Dorsolateral prefrontal cortex (tissue), 120 donors: ENCODE measurements at regions of chr11 and their contacts with region 1.

Region 1: DNA sequence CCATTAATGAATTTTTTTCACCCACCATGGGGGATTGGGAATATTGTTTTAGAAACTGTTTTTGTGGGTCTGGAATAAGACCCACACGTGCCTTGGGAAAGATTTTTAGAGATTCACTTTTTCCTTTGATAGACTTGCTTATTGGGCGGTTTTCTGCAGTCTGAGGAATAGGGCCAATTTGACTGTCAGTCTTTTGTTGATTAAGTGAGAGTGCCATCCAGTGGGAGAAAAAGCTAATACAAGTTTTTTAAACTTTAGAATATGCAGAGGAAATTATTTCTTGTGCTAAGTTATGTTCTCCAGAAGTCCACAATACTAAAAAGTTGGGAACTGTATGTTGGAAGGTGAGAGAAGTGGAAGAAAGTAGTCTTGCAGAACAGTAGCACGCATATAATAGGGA is 56.1 kb downstream of the PRMT3 start:
- DNase-seq: no peak
- H3K4me3 ChIP-seq: no peak overlapping the region
- H3K27ac ChIP-seq: no peak overlapping the region
- H3K27me3 ChIP-seq: no peaks in the 10 kb centered on the region
- CTCF ChIP-seq: peak in 49 of 56 donors; percentile 12 to 73 (median 41)

Region 2: GRCh38 chr11:20351751-20352262 is 91.8 kb before region 1 on chr11:
- intact Hi-C with region 1: no loop called
- DNase-seq: no peak
- H3K4me3 ChIP-seq: no peak overlapping the region
- H3K27ac ChIP-seq: no peak overlapping the region
- H3K27me3 ChIP-seq: no peaks in the 10 kb centered on the region
- CTCF ChIP-seq: no peak

Region 3: GRCh38 chr11:20363500-20364411 is 79.8 kb before region 1 on chr11 and contains the start of gene HTATIP2:
- intact Hi-C with region 1: no loop called
- DNase-seq: peak; percentile 50 to 84 (median 72)
- H3K4me3 ChIP-seq: peak within 1 kb of the TSS; percentile 56 to 95 (median 85)
- H3K27ac ChIP-seq: peak within 1 kb of the TSS; percentile 73 to 99 (median 97)
- H3K27me3 ChIP-seq: no peaks in the 10 kb centered on the region
- CTCF ChIP-seq: peak in 20 of 56 donors; percentile 6 to 43 (median 15)
- total RNA-seq, gene HTATIP2: 12.7 to 59.9 (median 25.5) TPM

Region 4: DNA sequence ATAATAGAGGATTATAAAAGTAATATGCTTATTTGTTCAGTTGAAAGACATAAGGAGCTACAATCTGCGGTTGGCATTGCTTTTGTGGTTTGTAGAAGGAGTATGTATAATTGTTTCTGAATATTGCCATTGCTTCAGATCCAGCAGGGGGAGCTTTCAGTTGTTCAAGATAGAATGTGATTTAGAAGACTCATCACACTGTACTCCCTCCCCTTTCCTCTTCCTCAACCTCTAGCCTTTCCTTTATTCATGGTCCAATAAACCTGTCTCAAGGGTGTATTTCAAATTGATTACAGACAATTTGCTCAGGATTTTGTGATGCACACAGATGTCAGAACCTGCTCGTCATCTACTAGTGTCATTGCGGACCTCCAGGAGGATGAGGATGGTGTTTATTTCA is 46.3 kb before region 1 on chr11:
- intact Hi-C with region 1: loop called in 1 of 2 experiments (anchors 10 kb)
- DNase-seq: peak in 1 of 10 donors; percentile 32
- H3K4me3 ChIP-seq: no peak overlapping the region
- H3K27ac ChIP-seq: no peak overlapping the region
- H3K27me3 ChIP-seq: no peaks in the 10 kb centered on the region
- CTCF ChIP-seq: peak; percentile 35 to 73 (median 59)

Region 5: DNA sequence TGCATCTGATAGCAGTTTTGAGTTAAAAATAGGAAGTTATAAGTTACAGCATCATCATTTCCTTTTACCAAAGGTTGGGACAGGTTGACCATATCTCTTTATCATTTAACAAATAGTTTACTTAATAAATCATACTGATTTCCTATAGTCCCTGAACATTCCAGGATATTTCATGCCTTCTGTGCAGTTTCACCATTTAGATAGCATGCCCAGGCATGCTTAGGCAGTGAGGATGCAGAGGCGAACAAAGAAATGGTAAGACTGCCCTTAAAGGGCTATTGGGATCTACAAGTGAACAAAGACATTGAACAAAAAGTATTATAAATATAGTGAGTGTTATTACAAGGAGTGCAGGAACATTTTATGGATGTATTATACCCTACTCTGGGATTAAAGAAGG is 40.3 kb after region 1 on chr11:
- intact Hi-C with region 1: no loop called
- DNase-seq: no peak
- H3K4me3 ChIP-seq: no peak overlapping the region
- H3K27ac ChIP-seq: no peak overlapping the region
- H3K27me3 ChIP-seq: no peaks in the 10 kb centered on the region
- CTCF ChIP-seq: no peak